ENCODE measurements at regions of chr20 and their contacts with region 1.

Region 1: GRCh38 chr20:45044084-45044573 is 56.8 kb downstream of the KCNS1 start:
- DNase-seq: peak; percentile 80
- ATAC-seq: peak; percentile 85
- H3K4me3 ChIP-seq: no peak overlapping the region
- H3K4me3 Mint-ChIP-seq: no peak overlapping the region
- H3K27ac ChIP-seq: peak overlapping the region in 1 of 2 donors; percentile 42
- H3K27ac Mint-ChIP-seq: peak overlapping the region; percentile 16
- H3K4me1 ChIP-seq: peaks cover 17 to 18% of the 10 kb centered on the region in 2 donors
- H3K4me1 Mint-ChIP-seq: peaks cover 66% of the 10 kb centered on the region
- H3K27me3 ChIP-seq: no peaks in the 10 kb centered on the region
- H3K27me3 Mint-ChIP-seq: no peaks in the 10 kb centered on the region
- CTCF ChIP-seq: peak; percentile 93

Region 2: DNA sequence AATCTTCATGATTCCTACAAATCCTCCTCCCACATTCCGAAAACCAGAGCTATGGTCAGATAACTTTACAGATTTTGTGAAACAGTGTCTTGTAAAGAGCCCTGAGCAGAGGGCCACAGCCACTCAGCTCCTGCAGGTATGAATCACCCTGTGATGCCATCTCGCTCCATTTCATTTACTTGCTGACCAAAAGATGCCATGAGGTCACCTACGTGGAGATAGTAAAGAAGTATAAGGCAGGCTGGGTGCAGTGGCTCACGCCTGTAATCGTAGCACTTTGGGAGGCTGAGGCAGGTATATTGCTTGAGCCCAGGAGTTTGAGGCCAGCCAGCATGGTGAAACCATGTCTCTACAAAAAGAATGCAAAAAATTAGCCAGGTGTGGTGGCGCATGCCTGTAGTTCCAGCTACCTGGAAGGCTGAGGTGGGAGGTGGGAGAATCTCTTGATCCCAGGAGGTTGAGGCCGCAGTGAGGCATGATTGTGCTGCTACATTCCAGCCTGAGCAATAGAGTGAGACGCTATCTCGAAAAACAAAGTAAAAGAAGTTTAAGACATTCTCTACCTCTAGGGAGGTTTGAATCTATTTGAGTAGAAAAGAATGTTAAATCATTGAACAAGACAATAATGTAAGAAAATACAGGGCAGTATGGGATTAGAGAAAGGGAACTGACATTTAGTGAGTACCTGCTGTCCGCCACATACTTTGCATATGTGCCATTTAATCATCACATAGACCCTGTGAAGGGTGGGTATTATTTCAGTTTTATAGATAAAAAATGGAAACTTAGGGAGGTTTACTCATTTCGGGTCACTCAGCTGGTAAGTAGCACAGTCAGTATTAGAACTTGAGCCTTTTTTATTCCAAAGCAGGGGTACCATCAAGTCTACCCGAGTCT is 46.7 kb before region 1 on chr20:
- CTCF ChIA-PET with region 1: interaction called, 11 read pairs
- POLR2A ChIA-PET with region 1: no interaction called
- intact Hi-C with region 1: no loop called
- DNase-seq: peak; percentile 45
- ATAC-seq: peak; percentile 91
- H3K4me3 ChIP-seq: no peak overlapping the region
- H3K4me3 Mint-ChIP-seq: peak overlapping the region; percentile 68
- H3K27ac ChIP-seq: peak overlapping the region in 1 of 2 donors; percentile 70
- H3K27ac Mint-ChIP-seq: peak overlapping the region; percentile 75
- H3K4me1 ChIP-seq: peaks cover 13 to 23% of the 10 kb centered on the region in 2 donors
- H3K4me1 Mint-ChIP-seq: peaks cover 40% of the 10 kb centered on the region
- H3K27me3 ChIP-seq: no peaks in the 10 kb centered on the region
- H3K27me3 Mint-ChIP-seq: no peaks in the 10 kb centered on the region
- CTCF ChIP-seq: no peak

Region 3: GRCh38 chr20:45011108-45011526 is 33.0 kb before region 1 on chr20:
- CTCF ChIA-PET with region 1: interaction called, 12 read pairs
- POLR2A ChIA-PET with region 1: no interaction called
- intact Hi-C with region 1: no loop called
- DNase-seq: peak; percentile 65
- ATAC-seq: peak; percentile 58
- H3K4me3 ChIP-seq: no peak overlapping the region
- H3K4me3 Mint-ChIP-seq: no peak overlapping the region
- H3K27ac ChIP-seq: peak overlapping the region in 1 of 2 donors; percentile 59
- H3K27ac Mint-ChIP-seq: no peak overlapping the region
- H3K4me1 ChIP-seq: no peaks in the 10 kb centered on the region
- H3K4me1 Mint-ChIP-seq: peaks cover 25% of the 10 kb centered on the region
- H3K27me3 ChIP-seq: no peaks in the 10 kb centered on the region
- H3K27me3 Mint-ChIP-seq: no peaks in the 10 kb centered on the region
- CTCF ChIP-seq: peak; percentile 76

Region 4: DNA sequence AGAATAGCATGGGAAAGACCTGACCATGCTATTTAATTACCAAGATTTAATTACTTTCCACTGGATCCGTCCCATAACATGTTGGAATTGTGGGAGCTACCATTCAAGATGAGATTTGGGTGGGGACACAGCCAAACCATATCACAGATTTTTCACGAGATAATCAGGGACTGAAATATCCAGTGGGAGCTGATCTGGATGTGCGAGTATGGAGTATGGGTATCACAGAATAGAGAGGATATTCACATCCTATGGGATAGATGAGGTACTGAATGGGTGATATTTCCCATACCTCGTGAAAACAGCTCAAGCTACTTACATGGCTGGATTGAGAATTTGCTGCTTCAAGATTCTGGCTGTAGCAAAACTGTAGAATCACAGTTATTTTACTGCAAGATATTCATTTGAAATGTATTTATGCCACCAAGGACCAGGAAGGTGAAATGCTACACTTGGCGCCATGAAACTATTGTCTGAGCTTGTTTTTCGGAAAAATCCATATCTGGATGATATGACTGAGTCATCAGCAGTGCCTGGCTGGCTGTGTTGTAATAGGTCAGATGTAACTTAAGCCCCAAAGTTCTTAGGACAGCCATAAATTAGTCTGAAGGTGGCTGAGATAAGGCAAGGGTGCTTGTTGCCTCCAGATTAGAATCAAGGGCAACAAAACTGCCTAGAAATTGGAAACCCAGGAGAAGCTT is 27.0 kb after region 1 on chr20:
- CTCF ChIA-PET with region 1: interaction called, 11 read pairs
- POLR2A ChIA-PET with region 1: no interaction called
- intact Hi-C with region 1: no loop called
- DNase-seq: no peak
- ATAC-seq: no peak
- H3K4me3 ChIP-seq: no peak overlapping the region
- H3K4me3 Mint-ChIP-seq: no peak overlapping the region
- H3K27ac ChIP-seq: peak overlapping the region in 1 of 2 donors; percentile 34
- H3K27ac Mint-ChIP-seq: no peak overlapping the region
- H3K4me1 ChIP-seq: no peaks in the 10 kb centered on the region
- H3K4me1 Mint-ChIP-seq: peaks cover 31% of the 10 kb centered on the region
- H3K27me3 ChIP-seq: no peaks in the 10 kb centered on the region
- H3K27me3 Mint-ChIP-seq: no peaks in the 10 kb centered on the region
- CTCF ChIP-seq: no peak

Region 5: GRCh38 chr20:45111799-45112471 is 67.8 kb after region 1 on chr20:
- CTCF ChIA-PET with region 1: interaction called, 24 read pairs
- POLR2A ChIA-PET with region 1: no interaction called
- intact Hi-C with region 1: loop called (anchors 1 kb)
- DNase-seq: peak; percentile 47
- ATAC-seq: no peak
- H3K4me3 ChIP-seq: no peak overlapping the region
- H3K4me3 Mint-ChIP-seq: no peak overlapping the region
- H3K27ac ChIP-seq: no peak overlapping the region
- H3K27ac Mint-ChIP-seq: no peak overlapping the region
- H3K4me1 ChIP-seq: no peaks in the 10 kb centered on the region
- H3K4me1 Mint-ChIP-seq: no peaks in the 10 kb centered on the region
- H3K27me3 ChIP-seq: peaks cover 0 to 5% (median 0%) of the 10 kb centered on the region in 4 experiments
- H3K27me3 Mint-ChIP-seq: peaks cover 6% of the 10 kb centered on the region
- CTCF ChIP-seq: peak; percentile 53

Region 6: DNA sequence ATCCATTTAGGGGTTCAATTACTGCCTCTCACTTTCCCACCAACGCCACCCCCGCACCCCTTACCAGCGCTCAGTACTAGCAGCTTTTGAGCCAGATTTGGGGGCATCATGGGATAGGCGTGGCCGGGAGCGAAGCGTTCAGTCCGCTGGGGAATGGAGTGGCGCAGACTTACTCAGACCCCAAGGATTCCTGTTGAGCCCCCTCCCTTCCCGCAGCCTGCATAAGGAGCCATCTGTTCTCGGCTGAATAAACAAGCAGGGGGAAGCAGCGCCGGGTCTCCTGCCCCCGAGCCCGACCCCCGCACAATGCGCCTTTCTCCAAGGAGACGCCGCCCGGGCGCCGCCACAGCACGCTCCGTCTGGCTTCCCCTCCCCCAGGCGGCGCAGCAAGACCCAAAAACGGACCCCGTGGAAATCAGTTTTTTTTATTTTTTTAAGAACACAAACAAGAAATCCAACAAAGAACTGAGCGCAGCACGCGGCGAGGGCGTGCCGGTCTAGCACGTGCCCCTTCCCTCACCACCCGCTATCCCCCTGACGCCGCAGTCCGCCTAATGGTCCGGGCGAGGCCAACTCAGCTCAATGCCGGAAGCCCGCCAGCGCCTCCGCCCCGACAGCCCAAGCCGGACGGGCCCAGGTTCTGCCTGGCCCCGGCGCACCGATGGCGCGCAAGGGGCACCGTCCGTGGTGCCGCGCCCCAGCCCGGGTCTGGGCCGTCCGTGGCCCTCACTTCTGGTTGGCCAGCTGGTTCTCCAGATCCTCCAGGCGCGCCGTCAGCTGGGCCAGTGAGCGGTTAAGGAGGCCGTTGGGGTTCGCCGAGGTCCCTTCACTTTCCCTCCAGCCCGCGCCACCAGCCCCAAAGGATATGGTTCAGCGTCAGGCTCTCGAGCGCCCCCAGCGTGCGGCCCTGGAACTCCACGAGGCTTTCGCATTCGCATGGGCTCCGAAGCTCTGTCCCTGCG is 249.2 kb after region 1 on chr20:
- CTCF ChIA-PET with region 1: interaction called, 20 read pairs
- POLR2A ChIA-PET with region 1: no interaction called
- intact Hi-C with region 1: loop called (anchors 1 kb)
- DNase-seq: peak; percentile 85
- ATAC-seq: peak; percentile 86
- H3K4me3 ChIP-seq: peak overlapping the region in 4 of 5 experiments; percentile 39 to 65 (median 60)
- H3K4me3 Mint-ChIP-seq: peak overlapping the region; percentile 87
- H3K27ac ChIP-seq: no peak overlapping the region
- H3K27ac Mint-ChIP-seq: no peak overlapping the region
- H3K4me1 ChIP-seq: peaks cover 13 to 21% of the 10 kb centered on the region in 2 donors
- H3K4me1 Mint-ChIP-seq: peaks cover 18% of the 10 kb centered on the region
- H3K27me3 ChIP-seq: peaks cover 0 to 42% (median 20%) of the 10 kb centered on the region in 4 experiments
- H3K27me3 Mint-ChIP-seq: peaks cover 41% of the 10 kb centered on the region
- CTCF ChIP-seq: peak; percentile 96